HepG2 (cell line): ENCODE measurements at regions of chr20 and their contacts with region 1.

Region 1: DNA sequence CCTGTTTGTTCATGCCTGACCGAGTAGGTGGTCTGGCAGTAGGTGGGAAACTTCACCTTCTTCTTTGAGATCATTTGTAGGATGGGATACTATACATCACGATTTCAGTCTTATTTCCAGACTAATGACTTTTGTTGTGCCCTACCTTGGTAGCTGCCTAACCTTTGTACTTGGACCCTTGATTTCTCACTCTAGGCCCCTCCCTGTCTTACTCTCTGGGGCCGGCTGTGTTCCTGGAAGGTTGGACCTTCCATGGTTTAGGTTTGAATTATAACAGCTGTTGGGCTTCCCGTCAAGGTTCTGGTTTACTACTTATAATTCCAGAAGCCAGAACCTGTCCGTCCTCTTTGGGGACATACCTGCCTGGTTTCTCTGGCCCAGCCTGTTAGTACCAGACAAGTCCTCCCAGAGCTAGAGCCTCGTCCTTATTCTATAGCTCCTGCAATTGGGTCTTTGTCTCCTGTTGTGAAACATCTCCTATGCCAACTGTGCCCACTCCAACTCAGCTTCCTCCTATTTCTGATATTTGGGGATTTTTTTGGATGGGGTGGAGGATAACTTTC is 14.9 kb upstream of the ADIG start:
- DNase-seq: no peak
- ATAC-seq: no peak
- H3K4me3 ChIP-seq: no peak overlapping the region
- H3K27ac ChIP-seq: no peak overlapping the region
- H3K4me1 ChIP-seq: peaks cover 7% of the 10 kb centered on the region; the same call in 1 of the 2 replicates
- H3K27me3 ChIP-seq: no peaks in the 10 kb centered on the region
- CTCF ChIP-seq: no peak
- EP300 ChIP-seq: no peak
- POLR2A ChIP-seq: no peak
- RAD21 ChIP-seq: no peak

Region 2: GRCh38 chr20:38550274-38550673 is 15.8 kb before region 1 on chr20:
- CTCF ChIA-PET with region 1: no interaction called
- POLR2A ChIA-PET with region 1: no interaction called
- in situ Hi-C with region 1: no loop called
- intact Hi-C with region 1: loop called (anchors 2 kb)
- DNase-seq: peak; percentile 16
- ATAC-seq: peak; percentile 71
- H3K4me3 ChIP-seq: no peak overlapping the region
- H3K27ac ChIP-seq: no peak overlapping the region
- H3K4me1 ChIP-seq: peaks cover 6% of the 10 kb centered on the region; the same call in 1 of the 2 replicates
- H3K27me3 ChIP-seq: no peaks in the 10 kb centered on the region
- CTCF ChIP-seq: no peak
- EP300 ChIP-seq: no peak
- POLR2A ChIP-seq: no peak
- RAD21 ChIP-seq: no peak

Region 3: GRCh38 chr20:38658879-38659596 is 92.9 kb after region 1 on chr20:
- CTCF ChIA-PET with region 1: no interaction called
- POLR2A ChIA-PET with region 1: no interaction called
- in situ Hi-C with region 1: no loop called
- intact Hi-C with region 1: no loop called
- DNase-seq: peak; percentile 60
- ATAC-seq: peak; percentile 96
- H3K4me3 ChIP-seq: no peak overlapping the region
- H3K27ac ChIP-seq: no peak overlapping the region
- H3K4me1 ChIP-seq: peaks cover 13% of the 10 kb centered on the region; the same call in 1 of the 2 replicates
- H3K27me3 ChIP-seq: peaks cover 7 to 35% of the 10 kb centered on the region in 2 experiments; a peak in 4 of 5 replicates
- CTCF ChIP-seq: peak; percentile 89
- EP300 ChIP-seq: no peak
- POLR2A ChIP-seq: no peak
- RAD21 ChIP-seq: peak; percentile 74